Mammary epithelial cell (primary cell): ENCODE measurements at regions of chr3 and their contacts with region 1.

Region 1: GRCh38 chr3:52471371-52472238 is 16.2 kb downstream of the NISCH start:
- DNase-seq: no peak
- H3K4me3 ChIP-seq: no peak overlapping the region
- H3K27ac ChIP-seq: no peak overlapping the region
- H3K4me1 ChIP-seq: peaks cover 16% of the 10 kb centered on the region
- H3K27me3 ChIP-seq: no peaks in the 10 kb centered on the region
- CTCF ChIP-seq: peak; percentile 65 to 70

Region 2: GRCh38 chr3:52406231-52406661 is 65.4 kb before region 1 on chr3:
- CTCF ChIA-PET with region 1: no interaction called
- dilution Hi-C with region 1: loop called (anchors 5 kb)
- in situ Hi-C with region 1: no loop called
- intact Hi-C with region 1: no loop called
- DNase-seq: peak; percentile 95
- H3K4me3 ChIP-seq: peak overlapping the region in 2 of 3 experiments; percentile 0 to 30
- H3K27ac ChIP-seq: peak overlapping the region; percentile 61
- H3K4me1 ChIP-seq: peaks cover 50% of the 10 kb centered on the region
- H3K27me3 ChIP-seq: no peaks in the 10 kb centered on the region
- CTCF ChIP-seq: no peak

Region 3: DNA sequence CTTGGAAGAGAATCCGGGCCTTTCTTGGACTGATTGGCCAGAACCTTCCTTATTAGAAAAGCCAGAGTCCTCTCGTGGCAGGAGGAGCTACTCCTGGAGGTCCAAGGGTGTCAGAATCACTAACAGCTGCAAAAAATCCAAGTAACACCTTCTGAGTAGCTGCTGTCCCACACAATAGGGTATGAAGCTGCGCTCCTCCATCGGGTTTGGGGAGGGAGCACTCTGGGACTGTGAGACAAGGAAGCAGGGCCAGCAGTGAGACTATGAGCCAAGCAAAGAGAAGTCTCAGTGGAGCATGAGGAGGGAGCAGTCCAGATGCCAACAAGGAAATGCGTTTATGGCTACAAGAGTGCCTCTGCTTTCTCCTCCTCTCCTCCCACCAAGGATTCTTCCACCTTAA is 48.4 kb before region 1 on chr3:
- CTCF ChIA-PET with region 1: no interaction called
- dilution Hi-C with region 1: no loop called
- in situ Hi-C with region 1: no loop called
- intact Hi-C with region 1: no loop called
- DNase-seq: no peak
- H3K4me3 ChIP-seq: no peak overlapping the region
- H3K27ac ChIP-seq: no peak overlapping the region
- H3K4me1 ChIP-seq: no peaks in the 10 kb centered on the region
- H3K27me3 ChIP-seq: no peaks in the 10 kb centered on the region
- CTCF ChIP-seq: no peak

Region 4: DNA sequence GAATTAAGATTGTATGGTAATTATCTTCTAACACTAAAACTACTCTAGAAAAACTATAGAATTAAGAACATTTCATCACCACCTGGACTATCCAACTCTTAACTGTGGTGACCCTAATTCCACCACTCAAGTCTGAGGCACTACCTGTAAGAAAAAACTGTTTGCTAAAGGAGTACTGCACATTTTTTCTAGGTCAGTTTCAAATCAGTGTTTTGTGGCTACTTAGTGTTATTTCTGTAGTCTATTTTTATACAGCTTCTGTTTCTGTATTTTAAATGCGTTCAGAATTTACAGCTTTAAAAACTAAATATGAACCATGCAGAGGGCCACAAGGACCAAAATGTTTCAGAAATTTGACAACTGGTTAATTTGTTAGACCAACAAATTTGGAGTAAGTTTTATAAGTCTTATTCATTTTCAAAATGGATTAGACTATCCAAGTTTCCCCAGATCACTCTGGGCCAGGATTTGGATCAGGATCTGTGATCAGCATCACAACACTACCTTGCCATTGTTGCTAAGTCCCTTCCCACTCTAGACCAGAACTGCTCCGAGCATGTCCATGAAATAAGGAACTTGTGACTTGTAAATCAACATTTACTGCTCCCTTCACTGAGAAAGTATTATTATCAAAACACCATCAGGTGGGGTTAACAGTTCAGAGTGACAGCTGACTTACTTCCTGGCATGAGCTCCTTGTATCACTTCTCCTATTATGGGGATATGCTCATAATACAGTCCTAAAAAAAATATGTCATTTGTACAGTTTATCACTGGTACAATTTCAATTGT is 225.4 kb after region 1 on chr3:
- CTCF ChIA-PET with region 1: no interaction called
- dilution Hi-C with region 1: no loop called
- in situ Hi-C with region 1: loop called in 1 of 2 experiments (anchors 10 kb)
- intact Hi-C with region 1: no loop called
- DNase-seq: no peak
- H3K4me3 ChIP-seq: no peak overlapping the region
- H3K27ac ChIP-seq: no peak overlapping the region
- H3K4me1 ChIP-seq: no peaks in the 10 kb centered on the region
- H3K27me3 ChIP-seq: no peaks in the 10 kb centered on the region
- CTCF ChIP-seq: no peak